ENCODE measurements at regions of chr1 and their contacts with region 1.

Region 1: DNA sequence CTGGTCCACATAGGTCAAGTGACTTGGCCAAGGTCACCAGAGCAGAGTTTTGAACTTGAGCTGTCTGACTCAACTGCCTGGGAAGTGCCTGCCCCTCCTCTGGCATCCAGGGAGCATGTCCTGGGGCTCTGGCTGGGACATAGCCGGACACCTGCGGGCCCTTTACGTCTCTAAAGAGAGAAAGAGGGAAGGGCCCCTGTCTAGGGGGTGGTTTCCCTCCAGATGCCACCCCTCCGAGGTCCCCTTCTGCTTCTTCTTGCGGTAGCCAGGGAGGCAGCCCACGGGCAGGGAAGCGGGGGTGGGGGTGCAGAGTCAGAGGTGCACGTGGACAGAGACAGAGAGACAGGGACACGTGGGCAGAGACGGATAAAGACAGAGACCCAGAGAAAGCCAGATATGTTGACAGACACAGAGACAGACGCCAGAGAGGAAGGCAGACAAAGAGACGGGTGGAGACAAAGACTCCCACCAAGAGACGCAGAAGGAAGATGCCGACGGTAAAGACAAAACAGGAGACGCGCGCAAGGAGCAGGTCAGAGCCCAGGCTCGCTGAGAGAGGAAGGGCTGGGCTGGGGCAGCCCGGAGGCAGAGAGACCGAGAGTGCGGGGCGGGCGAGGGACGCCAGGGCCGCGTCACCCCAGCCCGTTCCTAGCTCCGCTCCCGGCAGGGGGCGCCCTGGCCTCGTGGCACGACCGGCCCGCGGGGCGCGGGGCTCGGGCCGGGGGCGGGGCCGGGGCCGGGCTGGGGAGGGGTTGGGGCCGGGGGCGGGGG is 458 bp upstream of the ALPL start:
- DNase-seq: peak; percentile 67 to 97
- H3K4me3 ChIP-seq: peak overlapping the region; percentile 14 to 78 (median 42); a peak in 6 of 8 replicates
- H3K27ac ChIP-seq: no peak overlapping the region
- H3K4me1 ChIP-seq: peaks cover 14 to 22% (median 17%) of the 10 kb centered on the region in 4 experiments
- H3K27me3 ChIP-seq: peaks cover 0 to 17% (median 10%) of the 10 kb centered on the region in 4 experiments; a peak in 6 of 7 replicates
- CTCF ChIP-seq: peak; percentile 69 to 83 (median 79)
- EP300 ChIP-seq: no peak
- POLR2A ChIP-seq: peak in 1 of 2 experiments; percentile 45; a peak in 1 of 3 replicates
- RAD21 ChIP-seq: peak; percentile 59 to 77

Region 2: DNA sequence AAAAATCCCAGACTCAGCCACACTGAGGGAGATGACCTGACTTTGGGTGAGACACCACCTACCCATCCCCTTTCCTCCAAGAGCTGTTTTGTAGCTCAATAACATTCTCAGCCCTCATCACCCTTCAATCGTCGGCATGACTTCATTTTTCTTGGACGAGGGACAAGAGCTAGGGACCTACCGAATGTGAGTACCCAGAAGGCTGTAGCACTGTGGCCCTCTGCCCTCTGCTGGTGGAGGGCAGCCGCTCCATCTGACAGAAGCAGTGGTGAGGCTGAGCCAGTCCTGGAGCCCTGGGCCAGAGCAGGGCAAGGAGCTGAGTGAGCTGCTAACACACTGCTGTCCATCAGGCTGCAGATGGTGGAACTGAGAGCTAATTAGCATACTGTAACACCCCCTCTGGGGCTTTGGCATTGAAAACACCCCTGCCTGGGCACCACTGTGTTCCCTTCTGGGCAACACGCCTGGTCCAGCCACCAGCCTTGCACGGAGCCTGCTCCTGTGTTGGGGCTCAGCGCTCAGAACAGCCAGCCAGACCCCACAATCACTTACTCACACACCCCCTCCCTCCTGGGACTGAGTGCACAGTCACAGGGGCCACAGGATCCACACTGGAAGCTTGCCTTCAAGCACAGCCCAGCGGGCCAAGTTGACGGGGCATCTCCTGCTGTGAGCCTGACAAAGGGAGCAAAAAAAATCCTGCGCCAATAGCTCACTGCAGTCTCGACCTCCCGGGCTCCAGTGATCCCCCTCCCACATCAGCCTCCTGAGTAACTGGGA is 17.8 kb before region 1 on chr1:
- CTCF ChIA-PET with region 1: interaction called, 10 read pairs
- POLR2A ChIA-PET with region 1: no interaction called
- DNase-seq: no peak
- H3K4me3 ChIP-seq: peak overlapping the region in 1 of 4 experiments; percentile 29; a peak in 2 of 8 replicates
- H3K27ac ChIP-seq: no peak overlapping the region
- H3K4me1 ChIP-seq: peaks cover 5 to 8% (median 7%) of the 10 kb centered on the region in 4 experiments; a peak in 5 of 7 replicates
- H3K27me3 ChIP-seq: no peaks in the 10 kb centered on the region
- CTCF ChIP-seq: peak; percentile 87 to 98 (median 98)
- EP300 ChIP-seq: no peak
- POLR2A ChIP-seq: no peak
- RAD21 ChIP-seq: peak; percentile 83 to 87

Region 3: DNA sequence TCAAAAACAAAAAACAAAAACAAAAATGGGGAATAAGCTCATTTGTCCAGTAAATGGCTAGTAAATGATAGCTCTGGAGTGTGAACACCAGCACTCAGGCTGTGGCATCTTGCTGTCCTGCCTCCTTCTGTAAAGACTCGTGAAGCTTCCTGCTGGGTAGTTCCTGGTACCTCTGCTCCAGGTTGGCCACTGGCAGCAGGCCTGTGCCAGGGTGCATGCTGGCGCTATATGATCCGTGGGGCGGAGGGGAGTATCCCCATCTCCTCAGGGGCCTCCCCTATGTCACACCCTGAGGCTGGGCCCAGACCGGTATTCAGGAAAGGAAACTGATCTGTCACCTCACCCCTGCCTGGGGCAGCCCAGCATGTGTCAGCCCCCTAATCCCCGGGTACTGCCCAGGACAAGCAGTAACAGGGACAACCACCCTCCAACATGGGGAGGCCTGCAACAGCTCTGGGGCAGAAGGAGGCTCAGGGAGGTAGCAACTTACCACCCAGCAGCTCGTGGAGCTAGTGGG is 14.6 kb after region 1 on chr1:
- CTCF ChIA-PET with region 1: interaction called, 13 read pairs
- POLR2A ChIA-PET with region 1: interaction called, 8 read pairs
- DNase-seq: no peak
- H3K4me3 ChIP-seq: no peak overlapping the region
- H3K27ac ChIP-seq: no peak overlapping the region
- H3K4me1 ChIP-seq: peaks cover 6 to 24% (median 13%) of the 10 kb centered on the region in 4 experiments
- H3K27me3 ChIP-seq: no peaks in the 10 kb centered on the region
- CTCF ChIP-seq: no peak
- EP300 ChIP-seq: no peak
- POLR2A ChIP-seq: no peak
- RAD21 ChIP-seq: no peak

Region 4: GRCh38 chr1:21552715-21553114 is 44.0 kb after region 1 on chr1:
- CTCF ChIA-PET with region 1: interaction called, 13 read pairs
- POLR2A ChIA-PET with region 1: interaction called, 3 read pairs
- DNase-seq: no peak
- H3K4me3 ChIP-seq: no peak overlapping the region
- H3K27ac ChIP-seq: no peak overlapping the region
- H3K4me1 ChIP-seq: peaks cover 3 to 23% (median 12%) of the 10 kb centered on the region in 4 experiments
- H3K27me3 ChIP-seq: no peaks in the 10 kb centered on the region
- CTCF ChIP-seq: no peak
- EP300 ChIP-seq: no peak
- POLR2A ChIP-seq: no peak
- RAD21 ChIP-seq: no peak

Region 5: DNA sequence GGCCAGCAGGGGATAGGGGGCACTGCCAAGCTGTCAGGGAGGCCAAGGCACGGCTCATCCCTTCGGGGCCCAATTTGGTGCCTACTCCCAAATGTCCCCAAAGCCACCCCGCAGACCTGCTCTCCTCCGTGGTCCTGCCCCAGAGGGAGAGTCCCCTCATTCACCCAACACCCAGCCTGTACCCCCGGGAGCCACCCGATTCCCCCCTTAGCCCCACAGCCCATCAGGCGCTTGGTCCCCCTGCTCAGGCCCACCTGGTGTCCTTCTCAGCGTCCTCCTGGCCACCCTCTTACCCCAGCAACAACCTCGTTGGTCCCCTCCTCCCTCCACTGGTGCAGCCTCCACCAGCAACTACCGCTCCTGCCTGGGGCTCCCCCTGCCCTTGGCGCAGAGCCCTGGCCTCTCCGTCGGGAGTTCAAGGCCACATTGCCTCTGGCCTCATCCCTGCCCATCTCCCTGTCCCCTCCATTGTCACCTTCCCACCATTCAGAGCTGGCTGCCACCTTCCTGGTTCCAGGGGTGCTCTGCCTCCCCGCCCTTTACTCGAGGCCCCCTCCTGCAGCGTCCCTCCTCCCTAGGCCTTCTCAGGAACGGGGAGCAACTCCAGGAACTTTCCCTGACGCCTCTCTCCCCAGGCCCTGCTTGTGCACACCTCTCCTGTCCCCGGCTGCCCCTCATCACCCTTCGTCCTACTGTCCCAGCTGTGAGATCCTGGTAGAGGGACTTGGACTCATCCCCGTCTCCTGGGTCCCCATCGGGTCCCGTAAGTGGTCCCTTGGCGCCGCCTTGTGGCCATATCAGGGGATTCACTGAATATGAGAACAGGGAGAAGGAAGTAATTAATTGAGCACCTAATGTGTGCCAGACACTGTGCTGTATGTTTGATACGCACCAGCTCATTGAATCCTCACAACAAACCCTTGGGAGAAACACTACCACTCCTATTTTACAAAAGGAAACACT is 86.5 kb after region 1 on chr1:
- CTCF ChIA-PET with region 1: interaction called, 49 read pairs
- POLR2A ChIA-PET with region 1: interaction called, 3 read pairs
- DNase-seq: peak in 1 of 2 experiments; percentile 93
- H3K4me3 ChIP-seq: no peak overlapping the region
- H3K27ac ChIP-seq: no peak overlapping the region
- H3K4me1 ChIP-seq: peaks cover 5 to 14% (median 10%) of the 10 kb centered on the region in 4 experiments; a peak in 6 of 7 replicates
- H3K27me3 ChIP-seq: 0 out of 7 replicates have a peak, but pooled peaks cover 0 to 2% (median 0%) of the 10 kb centered on the region in 4 experiments
- CTCF ChIP-seq: peak in 2 of 3 experiments; percentile 90 to 94; a peak in 3 of 4 replicates
- EP300 ChIP-seq: no peak
- POLR2A ChIP-seq: no peak
- RAD21 ChIP-seq: peak; percentile 94 to 97

Measured in H1 (cell line).